ENCODE measurements at regions of chr12 and their contacts with region 1.

Region 1: DNA sequence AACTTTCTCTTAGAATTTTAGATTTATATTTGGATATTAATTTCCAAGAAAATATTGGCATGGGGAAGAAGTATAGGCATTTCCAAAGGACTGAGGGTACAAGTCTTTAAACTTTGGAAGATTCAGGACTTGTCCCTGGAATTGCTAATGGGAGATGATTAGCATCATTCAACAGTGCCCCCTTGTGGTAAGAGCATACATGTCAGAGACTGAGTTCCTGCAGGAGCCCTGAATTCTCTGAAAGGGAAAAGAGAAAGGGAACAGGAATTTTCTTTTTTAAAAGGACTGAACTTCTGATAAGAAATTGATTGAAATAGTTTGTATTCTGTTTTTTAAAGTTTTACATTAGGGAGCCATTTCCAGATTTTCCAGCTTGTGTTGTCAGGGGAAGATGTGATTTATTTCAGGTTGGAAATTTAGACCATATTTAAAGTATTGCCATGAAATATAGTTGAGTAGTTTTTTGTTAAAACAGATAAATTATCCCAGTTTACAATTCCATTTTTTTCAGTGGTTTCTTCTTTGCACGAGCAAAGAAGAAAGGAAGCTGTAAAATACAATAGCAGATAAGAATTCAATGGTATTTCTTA is 44.0 kb upstream of the REP15 start:
- DNase-seq: peak; percentile 67
- H3K4me3 ChIP-seq: no peak overlapping the region
- H3K27ac ChIP-seq: no peak overlapping the region
- H3K4me1 ChIP-seq: peaks cover 10% of the 10 kb centered on the region
- H3K27me3 ChIP-seq: no peaks in the 10 kb centered on the region
- CTCF ChIP-seq: peak; percentile 78 to 84

Region 2: GRCh38 chr12:26987634-26988424 is 664.4 kb before region 1 on chr12:
- CTCF ChIA-PET with region 1: no interaction called
- dilution Hi-C with region 1: no loop called
- in situ Hi-C with region 1: loop called in 1 of 2 experiments (anchors 25 kb)
- intact Hi-C with region 1: no loop called
- DNase-seq: no peak
- H3K4me3 ChIP-seq: no peak overlapping the region
- H3K27ac ChIP-seq: no peak overlapping the region
- H3K4me1 ChIP-seq: no peaks in the 10 kb centered on the region
- H3K27me3 ChIP-seq: no peaks in the 10 kb centered on the region
- CTCF ChIP-seq: no peak

Region 3: DNA sequence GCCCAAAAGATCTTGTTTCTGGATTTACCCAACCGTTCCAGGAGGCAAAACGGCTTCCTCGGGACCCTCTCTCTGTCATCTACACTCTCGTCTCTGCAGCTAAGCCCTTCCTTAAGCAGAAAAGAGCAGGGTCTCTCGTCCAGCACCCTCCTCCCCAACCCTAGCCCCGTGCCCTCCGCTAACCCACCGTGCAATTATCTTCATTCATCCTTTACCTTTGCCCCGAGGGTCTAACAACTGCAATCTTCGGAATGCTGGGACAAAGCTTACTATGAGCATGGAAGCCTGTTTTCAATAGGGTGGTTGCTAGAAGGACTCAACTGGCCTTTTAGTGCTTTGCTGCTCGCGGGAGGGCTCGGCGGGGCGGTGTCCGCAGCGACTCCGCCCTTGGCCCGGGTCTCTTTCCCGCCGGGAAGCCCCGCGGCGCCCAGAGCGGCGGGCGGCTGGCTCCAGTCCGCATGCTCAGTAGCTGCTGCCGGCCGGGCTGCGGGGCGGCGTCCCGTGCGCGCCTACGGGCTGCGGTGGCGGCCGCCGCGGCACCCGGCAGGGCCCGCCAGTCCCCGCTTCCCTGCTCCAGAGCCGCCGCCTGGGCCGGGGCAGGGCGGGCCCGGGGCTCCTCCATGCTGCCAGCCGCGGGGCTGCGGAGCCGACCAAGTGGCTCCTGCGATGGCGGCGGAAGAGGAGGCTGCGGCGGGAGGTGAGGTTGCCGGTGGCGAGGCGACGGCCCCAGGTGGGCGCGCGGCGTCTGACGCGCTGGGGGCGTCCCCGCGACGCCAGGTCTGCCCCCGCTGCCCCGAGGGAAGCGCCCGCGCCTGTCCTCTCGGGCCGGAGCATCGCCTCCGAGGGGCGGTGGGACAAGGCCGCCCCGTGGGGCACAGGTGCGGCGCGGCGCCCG is 319.6 kb before region 1 on chr12 and contains the start of gene BMAL2:
- CTCF ChIA-PET with region 1: no interaction called
- dilution Hi-C with region 1: no loop called
- in situ Hi-C with region 1: no loop called
- intact Hi-C with region 1: loop called (anchors 5 kb)
- DNase-seq: peak; percentile 40
- H3K4me3 ChIP-seq: peak within 1 kb of the TSS; percentile 66 to 82 (median 80)
- H3K27ac ChIP-seq: peak within 1 kb of the TSS; percentile 98
- H3K4me1 ChIP-seq: peaks cover 46% of the 10 kb centered on the region
- H3K27me3 ChIP-seq: no peaks in the 10 kb centered on the region
- CTCF ChIP-seq: no peak
- total RNA-seq, gene BMAL2: 8.8 to 51.6 TPM

Region 4: GRCh38 chr12:27412047-27412446 is 240.2 kb before region 1 on chr12:
- CTCF ChIA-PET with region 1: no interaction called
- dilution Hi-C with region 1: no loop called
- in situ Hi-C with region 1: no loop called
- intact Hi-C with region 1: no loop called
- DNase-seq: no peak
- H3K4me3 ChIP-seq: no peak overlapping the region
- H3K27ac ChIP-seq: no peak overlapping the region
- H3K4me1 ChIP-seq: no peaks in the 10 kb centered on the region
- H3K27me3 ChIP-seq: no peaks in the 10 kb centered on the region
- CTCF ChIP-seq: no peak

Region 5: DNA sequence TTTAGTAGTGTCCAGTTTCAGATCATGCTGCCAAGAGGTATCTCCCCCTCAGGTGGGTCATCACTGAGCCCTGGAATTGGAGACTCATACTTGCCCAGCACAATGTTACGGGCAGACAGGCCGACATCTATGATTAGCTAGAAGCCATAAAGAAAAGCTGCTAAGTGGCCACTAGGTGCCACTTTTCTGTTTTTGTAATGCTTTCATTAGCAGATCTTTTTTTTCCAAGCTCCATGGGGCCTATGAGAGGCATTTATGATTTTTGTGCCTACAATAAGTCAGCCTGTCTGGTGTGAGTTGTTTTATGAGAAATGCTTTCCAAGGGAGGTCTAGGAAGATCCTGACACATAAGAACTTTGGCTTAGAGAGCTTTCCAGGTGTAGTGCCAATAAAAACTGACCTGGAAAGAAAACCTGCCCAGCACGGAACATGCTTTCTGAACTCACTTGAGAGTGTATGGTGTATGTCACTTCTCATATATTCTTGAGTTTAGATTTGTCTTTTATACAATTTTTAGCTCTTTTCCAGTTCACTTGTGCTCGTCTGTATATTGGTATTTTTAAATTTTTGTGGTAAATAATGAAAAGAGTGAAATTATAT is 227.5 kb before region 1 on chr12:
- CTCF ChIA-PET with region 1: no interaction called
- dilution Hi-C with region 1: no loop called
- in situ Hi-C with region 1: loop called (anchors 10 kb)
- intact Hi-C with region 1: loop called (anchors 1 kb)
- DNase-seq: peak; percentile 38
- H3K4me3 ChIP-seq: no peak overlapping the region
- H3K27ac ChIP-seq: no peak overlapping the region
- H3K4me1 ChIP-seq: peaks cover 3% of the 10 kb centered on the region
- H3K27me3 ChIP-seq: no peaks in the 10 kb centered on the region
- CTCF ChIP-seq: peak; percentile 56 to 65

Region 6: GRCh38 chr12:27434673-27435565 is 217.3 kb before region 1 on chr12:
- CTCF ChIA-PET with region 1: interaction called, 3 read pairs
- dilution Hi-C with region 1: no loop called
- in situ Hi-C with region 1: no loop called
- intact Hi-C with region 1: loop called (anchors 1 kb)
- DNase-seq: no peak
- H3K4me3 ChIP-seq: no peak overlapping the region
- H3K27ac ChIP-seq: no peak overlapping the region
- H3K4me1 ChIP-seq: no peaks in the 10 kb centered on the region
- H3K27me3 ChIP-seq: no peaks in the 10 kb centered on the region
- CTCF ChIP-seq: peak; percentile 34 to 68

Region 7: DNA sequence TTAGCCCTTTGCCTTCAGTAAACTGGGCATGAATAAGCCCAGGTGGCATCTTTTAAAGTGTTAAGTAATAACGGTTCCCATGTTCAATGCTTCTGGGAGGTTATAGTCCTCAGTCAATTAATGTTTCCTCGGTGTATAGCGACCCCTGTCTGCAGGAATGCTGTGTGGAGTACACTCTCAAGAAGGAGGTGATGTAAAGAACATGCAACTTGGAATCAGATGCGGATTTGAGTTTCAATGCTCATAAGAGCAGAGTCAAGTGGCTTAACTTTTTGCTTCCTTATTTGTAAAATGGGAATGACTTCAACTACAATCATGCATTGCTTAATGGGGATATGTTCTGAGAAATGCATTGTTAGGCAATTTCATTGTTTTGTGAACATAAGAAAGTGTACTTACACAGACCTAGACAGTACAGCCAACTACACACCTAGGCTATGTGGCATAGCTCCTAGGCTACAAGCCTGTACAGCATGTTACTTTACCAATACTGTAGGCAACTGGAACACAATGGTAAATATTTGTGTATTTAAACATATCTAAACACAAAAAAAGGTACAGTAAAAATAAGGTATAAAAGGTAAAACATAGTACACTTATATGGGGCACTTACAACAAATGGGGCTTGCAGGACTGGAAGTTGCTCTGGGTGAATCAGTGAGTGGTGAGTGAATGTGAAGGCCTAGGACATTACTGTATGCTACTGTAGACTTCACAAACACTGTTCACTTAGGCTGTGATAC is 51.6 kb after region 1 on chr12:
- CTCF ChIA-PET with region 1: no interaction called
- dilution Hi-C with region 1: no loop called
- in situ Hi-C with region 1: no loop called
- intact Hi-C with region 1: loop called (anchors 5 kb)
- DNase-seq: peak; percentile 66
- H3K4me3 ChIP-seq: no peak overlapping the region
- H3K27ac ChIP-seq: no peak overlapping the region
- H3K4me1 ChIP-seq: no peaks in the 10 kb centered on the region
- H3K27me3 ChIP-seq: no peaks in the 10 kb centered on the region
- CTCF ChIP-seq: peak; percentile 90 to 93